Activated naive CD4-positive, alpha-beta T cell treated with anti-CD3 and anti-CD28 coated beads, Interleukin-2, amount 10 ng/mL, durations not matched to agents 7 days and 5 days (primary cell): ENCODE measurements at regions of chr16 and their contacts with region 1.

Region 1: GRCh38 chr16:66977341-66978113 is 10.9 kb upstream of the CES4A start:
- DNase-seq: peak; percentile 94
- H3K4me3 Mint-ChIP-seq: no peak overlapping the region
- H3K27ac Mint-ChIP-seq: peak overlapping the region; percentile 69
- H3K4me1 Mint-ChIP-seq: peaks cover 66% of the 10 kb centered on the region
- H3K27me3 Mint-ChIP-seq: peaks cover 5% of the 10 kb centered on the region

Region 2: DNA sequence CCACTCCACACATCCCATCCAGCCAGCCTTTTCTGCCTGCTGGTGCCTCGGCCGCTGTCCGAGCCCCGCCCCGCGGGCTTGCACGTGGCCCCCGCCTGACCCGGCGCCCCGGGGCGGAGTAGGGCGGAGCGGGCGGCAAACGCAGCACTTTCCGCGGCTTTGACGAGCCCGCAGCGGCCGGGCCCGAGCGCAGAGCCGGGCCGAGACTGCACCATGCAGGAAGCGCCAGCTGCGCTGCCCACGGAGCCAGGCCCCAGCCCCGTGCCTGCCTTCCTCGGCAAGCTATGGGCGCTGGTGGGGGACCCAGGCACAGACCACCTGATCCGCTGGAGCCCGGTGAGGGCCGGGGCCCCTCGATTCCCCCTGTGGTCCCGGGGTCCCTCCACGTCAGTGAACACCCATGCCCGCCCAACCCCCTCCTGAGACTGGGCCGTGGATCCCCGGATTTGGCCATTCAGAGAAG is 187.1 kb after region 1 on chr16 and contains the start of gene HSF4:
- CTCF ChIA-PET with region 1: no interaction called
- DNase-seq: peak; percentile 56
- H3K4me3 Mint-ChIP-seq: peak within 1 kb of the TSS; percentile 94
- H3K27ac Mint-ChIP-seq: peak within 1 kb of the TSS; percentile 80
- H3K4me1 Mint-ChIP-seq: peaks cover 58% of the 10 kb centered on the region
- H3K27me3 Mint-ChIP-seq: peaks cover 88% of the 10 kb centered on the region

Region 3: DNA sequence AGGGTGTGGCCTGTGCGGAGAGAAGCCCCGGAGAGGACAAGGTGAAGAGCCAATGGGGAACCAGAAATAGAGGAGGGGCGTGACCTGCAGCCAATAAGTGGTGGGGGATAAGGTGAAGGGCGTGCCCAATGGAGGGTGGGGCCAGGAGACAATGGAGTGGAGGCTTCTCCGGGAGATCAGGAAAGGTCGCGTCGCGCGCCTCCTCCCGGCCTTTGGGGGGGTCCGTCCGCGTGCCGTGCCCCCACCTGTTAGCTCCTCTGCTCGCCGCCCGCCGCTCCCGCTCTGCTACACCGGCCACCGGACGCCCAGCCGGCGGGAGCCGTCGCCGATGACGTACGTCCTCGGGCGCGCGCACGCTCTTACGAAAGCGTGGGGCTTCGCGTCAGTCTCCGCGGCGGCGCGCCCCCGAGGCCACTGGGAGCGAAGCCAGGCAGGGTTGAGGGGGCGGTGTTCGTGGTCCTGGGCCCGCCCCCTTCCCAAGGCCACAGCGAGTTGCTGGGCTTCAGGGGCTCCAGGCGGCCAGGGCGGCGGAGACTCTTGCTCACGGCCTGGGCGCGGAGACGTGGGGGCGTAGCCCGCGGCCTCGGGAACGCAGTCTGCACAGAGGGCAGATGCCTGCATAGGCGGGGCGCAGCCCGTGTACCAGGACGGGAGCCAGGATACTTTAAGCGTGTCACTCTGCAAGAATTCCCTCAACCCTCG is 206.3 kb after region 1 on chr16 and contains the start of gene MATCAP1:
- CTCF ChIA-PET with region 1: interaction called, 26 read pairs
- DNase-seq: peak; percentile 98
- H3K4me3 Mint-ChIP-seq: no peak within 1 kb of the TSS
- H3K27ac Mint-ChIP-seq: no peak within 1 kb of the TSS
- H3K4me1 Mint-ChIP-seq: peaks cover 25% of the 10 kb centered on the region
- H3K27me3 Mint-ChIP-seq: peaks cover 39% of the 10 kb centered on the region